ENCODE measurements at regions of chr7 and their contacts with region 1.

Region 1: GRCh38 chr7:36291387-36292316 is 98.0 kb upstream of the ANLN start:
- DNase-seq: peak; percentile 92
- H3K4me3 ChIP-seq: peak overlapping the region; percentile 23 to 40 (median 35)
- H3K27ac ChIP-seq: peak overlapping the region; percentile 78 to 91 (median 82)
- H3K4me1 ChIP-seq: peaks cover 0 to 29% (median 25%) of the 10 kb centered on the region in 4 donors
- H3K27me3 ChIP-seq: no peaks in the 10 kb centered on the region
- CTCF ChIP-seq: peak; percentile 94 to 99 (median 98)
- EP300 ChIP-seq: peak in 1 of 4 donors; percentile 12
- POLR2A ChIP-seq: no peak

Region 2: DNA sequence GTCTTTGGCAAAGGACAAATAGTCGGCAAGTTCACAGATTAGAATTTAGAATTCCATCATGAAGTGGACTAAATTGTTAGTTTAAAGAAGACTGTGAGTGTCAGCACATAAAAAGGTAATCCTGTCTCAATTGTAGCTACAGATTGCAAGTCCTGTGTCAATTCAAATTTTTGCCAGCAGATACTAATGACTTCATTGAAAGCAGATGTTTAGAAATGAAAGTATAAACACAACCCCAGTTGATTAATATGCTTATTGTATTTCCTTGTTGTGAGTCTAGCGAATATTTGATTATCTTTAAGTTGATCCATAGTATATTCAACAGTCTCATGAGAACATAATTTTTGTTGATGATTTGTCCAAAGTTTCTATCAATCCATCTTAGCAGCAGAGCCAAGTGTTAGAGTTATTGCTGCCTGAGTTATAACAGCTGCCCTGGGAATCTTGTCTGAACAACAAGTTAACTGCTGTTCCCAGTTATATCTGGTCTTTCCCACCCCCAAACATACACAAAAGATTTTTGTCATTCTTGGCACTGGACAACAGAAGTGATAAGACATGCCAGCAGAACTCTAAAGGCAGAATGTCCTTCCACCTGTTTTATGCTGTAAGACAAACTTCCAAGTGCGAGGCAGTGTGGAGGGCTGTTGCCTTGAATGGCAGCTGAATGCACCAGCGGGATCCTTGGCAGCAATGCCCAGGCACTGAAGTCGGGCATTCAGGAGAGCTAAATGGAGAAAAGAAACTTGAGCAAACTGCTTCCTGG is 575.4 kb before region 1 on chr7:
- intact Hi-C with region 1: loop called (anchors 10 kb)
- DNase-seq: no peak
- H3K4me3 ChIP-seq: peak overlapping the region in 3 of 4 donors; percentile 7 to 39 (median 12)
- H3K27ac ChIP-seq: peak overlapping the region; percentile 48 to 78 (median 62)
- H3K4me1 ChIP-seq: peaks cover 0 to 44% (median 23%) of the 10 kb centered on the region in 4 donors
- H3K27me3 ChIP-seq: no peaks in the 10 kb centered on the region
- CTCF ChIP-seq: no peak
- EP300 ChIP-seq: no peak
- POLR2A ChIP-seq: no peak

Region 3: DNA sequence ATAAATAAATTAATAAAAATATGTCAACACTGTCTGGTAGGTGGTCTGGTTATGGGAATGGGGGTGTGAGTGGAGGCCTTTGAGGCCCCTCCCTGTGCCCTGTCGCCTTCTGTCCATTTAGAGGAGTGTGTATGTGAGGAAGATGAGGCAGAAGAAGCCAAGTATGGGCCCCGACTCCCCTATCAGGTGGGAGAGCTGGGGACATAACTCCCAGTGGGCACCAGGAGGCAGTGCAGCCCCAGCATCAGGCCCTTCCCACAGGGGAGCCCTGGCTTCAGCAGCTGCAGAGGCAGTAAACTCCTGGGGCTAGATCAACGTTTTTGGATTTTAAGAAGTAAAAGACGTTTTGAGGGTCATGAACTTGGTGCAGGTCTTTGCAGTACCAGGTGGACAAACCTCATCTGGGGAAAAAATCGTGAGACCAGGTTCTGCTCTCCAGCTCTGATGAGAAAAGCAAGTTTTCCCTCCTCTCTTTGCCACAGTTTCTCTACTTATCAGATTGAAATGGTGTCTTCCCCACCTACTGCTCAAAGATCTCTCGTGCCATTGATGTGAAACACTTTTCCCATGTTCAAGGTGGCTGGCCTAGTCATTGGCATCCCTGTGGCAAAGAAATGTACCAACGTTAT is 306.4 kb before region 1 on chr7:
- intact Hi-C with region 1: loop called (anchors 1 kb)
- DNase-seq: peak; percentile 89
- H3K4me3 ChIP-seq: no peak overlapping the region
- H3K27ac ChIP-seq: no peak overlapping the region
- H3K4me1 ChIP-seq: peaks cover 0 to 19% (median 14%) of the 10 kb centered on the region in 4 donors
- H3K27me3 ChIP-seq: no peaks in the 10 kb centered on the region
- CTCF ChIP-seq: peak; percentile 85 to 94 (median 91)
- EP300 ChIP-seq: no peak
- POLR2A ChIP-seq: no peak

Region 4: DNA sequence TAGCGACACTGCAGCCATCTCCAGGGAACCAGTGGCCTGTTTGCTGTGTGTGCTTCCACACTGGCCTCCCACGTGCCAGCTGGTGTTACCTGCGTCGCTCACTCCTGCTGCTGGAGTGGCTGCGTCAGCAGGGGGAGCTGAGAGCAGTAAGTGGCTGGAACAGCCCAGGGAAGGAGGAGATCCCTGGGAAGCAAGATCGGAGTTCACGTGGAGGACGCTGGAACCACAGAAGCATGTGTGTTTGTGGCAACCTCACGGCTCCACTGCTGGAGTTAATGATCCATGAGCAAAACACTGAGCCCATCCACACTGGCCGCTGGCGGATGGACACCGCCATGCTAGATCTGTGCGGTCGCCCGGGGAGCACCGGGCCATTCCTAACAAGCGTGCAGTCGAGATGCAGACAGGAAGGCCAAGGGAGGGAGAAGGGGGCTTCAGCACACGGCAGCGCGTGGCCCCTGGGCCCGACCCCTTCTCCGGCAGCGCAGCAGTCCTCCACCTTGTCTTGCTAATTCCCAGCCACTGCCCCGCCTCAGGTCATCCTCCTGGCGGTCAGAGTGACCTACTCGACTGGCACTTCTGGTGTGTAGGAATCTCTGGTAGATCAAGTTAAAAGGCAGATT is 207.1 kb before region 1 on chr7:
- intact Hi-C with region 1: loop called (anchors 1 kb)
- DNase-seq: peak; percentile 72
- H3K4me3 ChIP-seq: no peak overlapping the region
- H3K27ac ChIP-seq: no peak overlapping the region
- H3K4me1 ChIP-seq: no peaks in the 10 kb centered on the region
- H3K27me3 ChIP-seq: no peaks in the 10 kb centered on the region
- CTCF ChIP-seq: peak in 2 of 4 experiments; percentile 53 to 61
- EP300 ChIP-seq: no peak
- POLR2A ChIP-seq: no peak

Region 5: DNA sequence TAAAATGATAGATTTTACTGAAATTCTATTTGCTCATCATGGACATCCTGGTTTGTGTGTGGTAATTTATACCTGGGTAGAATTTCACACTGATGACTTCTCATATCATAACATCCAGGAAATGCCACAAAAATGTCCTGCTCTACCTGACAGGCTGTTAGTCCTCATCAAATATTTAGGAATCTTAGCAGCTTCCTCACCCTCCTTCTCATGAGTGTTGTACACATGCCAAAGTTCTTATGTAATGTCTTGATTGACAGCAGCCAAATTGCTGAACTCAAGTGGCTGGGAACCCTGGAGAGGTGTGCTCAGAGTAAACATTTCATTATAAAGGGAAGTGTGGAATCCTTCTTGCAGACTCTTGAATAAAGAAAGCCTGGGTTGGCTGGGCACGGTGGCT is 129.7 kb before region 1 on chr7:
- intact Hi-C with region 1: loop called (anchors 2 kb)
- DNase-seq: no peak
- H3K4me3 ChIP-seq: no peak overlapping the region
- H3K27ac ChIP-seq: no peak overlapping the region
- H3K4me1 ChIP-seq: peaks cover 0 to 67% (median 58%) of the 10 kb centered on the region in 4 donors
- H3K27me3 ChIP-seq: no peaks in the 10 kb centered on the region
- CTCF ChIP-seq: no peak
- EP300 ChIP-seq: no peak
- POLR2A ChIP-seq: no peak

Region 6: GRCh38 chr7:36315309-36316133 is 23.9 kb after region 1 on chr7:
- intact Hi-C with region 1: loop called (anchors 2 kb)
- DNase-seq: no peak
- H3K4me3 ChIP-seq: no peak overlapping the region
- H3K27ac ChIP-seq: no peak overlapping the region
- H3K4me1 ChIP-seq: no peaks in the 10 kb centered on the region
- H3K27me3 ChIP-seq: no peaks in the 10 kb centered on the region
- CTCF ChIP-seq: no peak
- EP300 ChIP-seq: no peak
- POLR2A ChIP-seq: no peak

Region 7: DNA sequence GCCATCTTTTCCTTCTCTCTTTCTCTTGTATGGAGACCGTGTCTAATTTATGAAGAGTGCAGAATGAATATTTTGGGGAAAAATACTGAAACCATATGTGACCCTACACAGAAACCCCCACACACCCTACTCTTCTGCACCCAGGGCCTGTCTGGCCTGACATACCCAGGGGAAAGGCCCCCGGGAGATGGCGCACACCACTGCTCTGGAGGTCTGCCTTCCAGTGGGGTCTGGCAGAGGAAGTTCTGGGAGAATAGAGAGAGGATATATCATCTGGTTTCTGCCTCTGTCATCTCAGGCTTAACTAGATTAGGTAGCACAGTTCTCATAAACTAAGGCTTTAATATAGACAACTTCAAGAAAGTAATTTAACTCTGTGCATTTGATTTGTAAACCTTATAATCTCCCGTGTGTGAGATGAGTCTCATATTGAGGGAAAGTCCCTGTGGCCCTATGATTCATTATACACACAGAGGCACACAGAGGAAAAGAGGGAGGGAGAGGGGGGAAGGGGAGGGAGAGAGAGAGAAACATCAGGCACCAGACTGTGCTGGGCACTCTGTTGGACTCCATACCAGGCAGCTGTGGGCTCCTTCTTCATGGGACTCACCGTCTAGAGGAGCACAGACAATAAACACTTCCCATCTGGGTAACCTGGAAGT is 309.3 kb after region 1 on chr7:
- intact Hi-C with region 1: no loop called
- DNase-seq: no peak
- H3K4me3 ChIP-seq: no peak overlapping the region
- H3K27ac ChIP-seq: no peak overlapping the region
- H3K4me1 ChIP-seq: no peaks in the 10 kb centered on the region
- H3K27me3 ChIP-seq: no peaks in the 10 kb centered on the region
- CTCF ChIP-seq: no peak
- EP300 ChIP-seq: no peak
- POLR2A ChIP-seq: no peak